ENCODE measurements at regions of chr7 and their contacts with region 1.

Region 1: DNA sequence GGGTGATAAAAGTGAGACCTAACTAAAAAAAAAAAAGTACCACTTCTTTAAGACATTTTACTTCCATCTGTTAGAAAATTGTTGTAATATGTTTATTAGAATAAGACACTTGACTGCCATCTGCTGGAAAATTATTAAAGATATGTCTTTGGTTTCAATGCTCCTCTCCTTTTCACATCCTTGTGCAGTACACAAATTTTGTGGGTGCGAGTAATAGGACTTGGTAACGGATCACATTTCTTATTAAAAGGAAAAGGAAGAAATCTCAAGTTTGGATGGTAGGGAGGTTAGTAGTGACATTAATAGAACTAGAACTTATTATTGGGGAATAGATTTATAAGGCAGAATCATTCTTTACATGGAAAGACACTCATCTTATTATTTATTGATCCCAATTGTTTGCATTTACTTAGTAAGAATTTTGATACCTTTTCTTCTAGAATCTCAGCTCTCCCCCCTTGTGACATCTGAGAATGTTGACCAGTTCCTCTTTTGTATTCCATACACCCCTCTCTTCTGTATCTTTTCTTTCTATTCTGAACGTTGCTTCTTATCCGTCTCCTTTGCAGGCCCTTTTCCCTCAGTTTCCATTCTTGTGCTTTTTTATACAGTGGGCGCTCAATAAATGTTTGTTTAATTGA is 43.1 kb upstream of the RPA3 start:
- DNase-seq: no peak
- ATAC-seq: peak; percentile 48 to 64
- H3K4me3 ChIP-seq: peak overlapping the region; percentile 55
- H3K27ac ChIP-seq: peak overlapping the region; percentile 68
- H3K4me1 ChIP-seq: peaks cover 13% of the 10 kb centered on the region
- H3K27me3 ChIP-seq: no peaks in the 10 kb centered on the region
- CTCF ChIP-seq: peak; percentile 43

Region 2: DNA sequence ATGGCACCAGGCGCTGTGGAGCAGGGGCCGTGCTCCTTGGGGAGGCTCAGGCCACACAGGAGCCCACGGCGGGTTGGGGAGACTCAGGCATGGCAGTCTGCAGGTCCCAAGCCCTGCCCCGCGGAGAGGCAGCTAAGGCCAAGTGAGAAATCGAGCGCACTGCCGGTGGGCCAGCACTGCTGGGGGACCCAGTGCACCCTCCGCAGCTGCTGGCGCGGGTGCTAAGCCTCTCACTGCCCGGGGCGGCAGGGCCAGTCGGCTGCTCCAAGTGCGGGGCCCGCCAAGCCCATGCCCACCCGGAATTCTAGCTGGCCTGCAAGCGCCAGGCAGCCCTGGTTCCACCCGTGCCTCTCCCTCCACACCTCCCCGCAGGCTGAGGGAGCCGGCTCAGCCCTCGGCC is 282.9 kb before region 1 on chr7:
- intact Hi-C with region 1: no loop called
- DNase-seq: no peak
- ATAC-seq: no peak
- H3K4me3 ChIP-seq: no peak overlapping the region
- H3K27ac ChIP-seq: no peak overlapping the region
- H3K4me1 ChIP-seq: no peaks in the 10 kb centered on the region
- H3K27me3 ChIP-seq: no peaks in the 10 kb centered on the region
- CTCF ChIP-seq: no peak

Region 3: DNA sequence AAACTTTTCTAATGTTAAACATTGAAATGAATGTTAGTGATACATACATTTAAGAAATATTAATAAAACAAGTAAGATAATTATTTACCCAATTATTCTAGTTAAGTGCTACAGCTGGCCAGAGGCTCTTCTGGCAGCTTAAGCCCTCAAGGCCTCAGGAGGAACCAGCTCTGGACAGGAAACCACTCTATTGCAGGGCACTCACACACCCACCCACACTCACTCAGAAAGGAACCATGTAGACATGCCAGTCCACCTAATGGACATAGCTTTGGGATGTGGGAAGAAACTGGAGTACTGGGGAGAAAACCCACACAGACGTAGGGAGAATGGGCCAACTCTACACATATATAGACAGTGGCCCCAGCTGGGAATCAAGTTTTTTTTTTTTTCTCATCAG is 92.8 kb before region 1 on chr7:
- intact Hi-C with region 1: no loop called
- DNase-seq: no peak
- ATAC-seq: peak; percentile 67 to 70
- H3K4me3 ChIP-seq: no peak overlapping the region
- H3K27ac ChIP-seq: no peak overlapping the region
- H3K4me1 ChIP-seq: peaks cover 18% of the 10 kb centered on the region
- H3K27me3 ChIP-seq: no peaks in the 10 kb centered on the region
- CTCF ChIP-seq: no peak

Region 4: GRCh38 chr7:7681179-7681935 is 80.1 kb before region 1 on chr7:
- intact Hi-C with region 1: loop called (anchors 5 kb)
- DNase-seq: no peak
- ATAC-seq: peak; percentile 76 to 95
- H3K4me3 ChIP-seq: no peak overlapping the region
- H3K27ac ChIP-seq: peak overlapping the region; percentile 19
- H3K4me1 ChIP-seq: peaks cover 15% of the 10 kb centered on the region
- H3K27me3 ChIP-seq: no peaks in the 10 kb centered on the region
- CTCF ChIP-seq: peak; percentile 63